Activated naive CD4-positive, alpha-beta T cell treated with anti-CD3 and anti-CD28 coated beads for 36 hours (primary cell): ENCODE measurements at regions of chr6 and their contacts with region 1.

Region 1: GRCh38 chr6:89080542-89081422 is at the start of gene PNRC1:
- DNase-seq: peak; percentile 100
- H3K4me3 Mint-ChIP-seq: peak within 1 kb of the TSS; percentile 93
- H3K27ac Mint-ChIP-seq: peak within 1 kb of the TSS; percentile 99
- H3K4me1 Mint-ChIP-seq: peaks cover 30% of the 10 kb centered on the region
- H3K27me3 Mint-ChIP-seq: no peaks in the 10 kb centered on the region
- total RNA-seq, gene PNRC1: 110 to 111 TPM

Region 2: DNA sequence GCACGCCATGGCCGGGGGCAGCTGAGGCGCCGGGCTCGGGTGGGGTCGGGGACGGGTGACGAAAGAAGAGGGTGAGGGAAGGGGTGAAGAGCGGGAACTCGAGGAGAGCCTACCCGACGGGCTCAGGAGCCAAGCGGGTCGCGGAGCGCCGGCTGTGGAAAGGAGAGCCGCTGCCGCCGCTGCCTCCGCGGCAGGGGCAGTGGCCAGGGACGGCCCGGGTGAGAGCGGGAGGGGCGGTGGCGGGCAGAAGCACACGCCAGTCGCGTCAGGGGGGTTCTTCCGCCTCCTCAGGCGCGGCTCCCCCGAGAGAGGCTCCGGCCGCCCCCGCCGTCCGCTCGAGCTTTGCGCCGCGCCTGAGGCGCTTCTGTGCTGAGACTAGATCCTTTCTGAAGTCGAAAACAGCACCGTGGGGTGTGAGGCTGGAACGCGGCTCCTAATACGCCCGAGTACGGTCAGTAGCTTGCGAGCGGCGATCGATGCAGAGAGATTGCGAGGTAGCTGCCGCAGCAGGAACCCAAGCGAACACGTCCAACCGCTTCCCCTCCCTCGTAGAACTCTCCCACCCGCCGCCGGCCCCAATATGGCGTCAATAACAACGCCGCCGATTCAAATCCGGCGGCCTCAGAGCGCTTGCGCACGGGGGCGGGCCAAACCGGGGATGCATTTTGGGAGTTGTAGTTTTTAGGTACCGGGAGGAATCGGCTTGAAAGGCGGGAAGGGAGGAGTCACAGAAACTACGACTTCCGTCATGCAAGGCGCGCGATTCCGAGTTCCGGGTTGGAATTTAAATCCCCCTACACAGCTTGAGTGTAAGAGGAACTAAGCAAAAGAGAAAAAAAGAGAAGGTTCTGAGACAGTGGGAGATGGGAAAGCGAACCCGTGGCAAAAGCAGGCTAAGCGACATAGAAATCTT is 1378.8 kb before region 1 on chr6 and contains the start of gene AKIRIN2:
- CTCF ChIA-PET with region 1: no interaction called
- intact Hi-C with region 1: loop called (anchors 2 kb)
- DNase-seq: peak; percentile 97
- H3K4me3 Mint-ChIP-seq: peak within 1 kb of the TSS; percentile 86
- H3K27ac Mint-ChIP-seq: peak within 1 kb of the TSS; percentile 89
- H3K4me1 Mint-ChIP-seq: peaks cover 42% of the 10 kb centered on the region
- H3K27me3 Mint-ChIP-seq: no peaks in the 10 kb centered on the region
- total RNA-seq, gene AKIRIN2: 47.6 to 49.8 TPM

Region 3: DNA sequence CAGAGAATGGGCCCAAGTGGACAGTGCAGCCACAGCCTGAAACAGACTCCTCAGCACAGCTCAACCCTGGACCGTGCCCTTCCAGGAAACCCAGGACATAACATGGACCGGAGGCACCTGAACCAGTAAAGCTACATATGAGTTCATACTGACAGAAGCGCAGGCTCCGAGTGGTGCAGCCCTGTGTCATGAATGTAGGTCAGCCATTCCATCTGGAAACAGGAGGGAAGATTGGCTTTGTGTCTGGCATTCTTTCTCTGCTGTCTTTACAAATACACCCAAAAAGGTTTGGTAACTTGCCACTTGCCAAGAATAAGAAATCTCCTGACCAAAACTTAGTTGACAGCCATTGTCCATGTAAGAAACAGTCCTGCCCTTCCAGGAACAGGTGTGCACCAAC is 484.0 kb before region 1 on chr6:
- CTCF ChIA-PET with region 1: no interaction called
- intact Hi-C with region 1: no loop called
- DNase-seq: no peak
- H3K4me3 Mint-ChIP-seq: no peak overlapping the region
- H3K27ac Mint-ChIP-seq: no peak overlapping the region
- H3K4me1 Mint-ChIP-seq: no peaks in the 10 kb centered on the region
- H3K27me3 Mint-ChIP-seq: no peaks in the 10 kb centered on the region

Region 4: DNA sequence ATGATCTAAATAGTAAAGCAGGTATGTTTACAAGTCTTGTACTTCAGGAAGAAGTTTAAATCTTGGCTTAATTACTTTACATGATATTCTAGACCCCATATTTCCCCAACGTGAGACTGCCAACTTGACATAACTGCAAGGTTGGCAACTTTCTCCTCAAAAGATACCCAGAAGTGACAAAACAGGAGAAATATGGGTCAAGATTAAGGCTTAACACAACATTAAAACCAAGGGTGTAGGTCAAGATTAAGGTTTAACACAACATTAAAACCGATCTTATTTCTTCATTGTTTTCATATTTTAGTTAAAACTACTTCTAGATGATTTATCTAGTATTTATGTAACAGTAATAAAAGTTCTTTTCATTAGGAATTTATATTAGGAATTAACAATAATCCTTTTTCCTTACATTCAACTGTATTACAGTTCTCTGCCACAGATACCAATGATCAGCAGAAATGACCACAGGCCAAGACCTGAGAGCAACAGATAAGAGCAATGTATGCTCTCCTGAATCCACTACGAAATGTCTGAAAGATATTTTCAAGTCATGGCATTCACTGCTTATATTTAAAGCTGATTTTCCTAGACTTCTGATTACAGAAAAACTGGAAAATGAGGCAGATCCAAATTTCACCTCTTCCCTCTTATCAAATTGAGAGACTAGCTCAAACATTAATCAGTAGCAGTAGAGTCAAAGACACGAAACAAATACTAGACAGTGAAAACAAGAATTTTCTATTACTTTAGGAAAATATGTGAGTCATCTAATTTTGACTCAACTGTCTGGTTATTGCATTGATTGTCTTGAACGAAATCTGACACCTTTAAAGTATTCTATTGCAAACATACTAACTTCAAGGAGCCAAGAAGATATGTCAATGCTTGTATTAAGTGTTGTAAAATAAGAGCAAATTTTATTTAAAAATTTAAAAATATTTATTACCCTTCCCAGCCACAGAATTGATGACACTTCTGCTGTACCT is 189.6 kb before region 1 on chr6:
- CTCF ChIA-PET with region 1: no interaction called
- intact Hi-C with region 1: no loop called
- DNase-seq: no peak
- H3K4me3 Mint-ChIP-seq: no peak overlapping the region
- H3K27ac Mint-ChIP-seq: no peak overlapping the region
- H3K4me1 Mint-ChIP-seq: peaks cover 4% of the 10 kb centered on the region
- H3K27me3 Mint-ChIP-seq: no peaks in the 10 kb centered on the region

Region 5: GRCh38 chr6:89098461-89098860 is 17.7 kb after region 1 on chr6:
- CTCF ChIA-PET with region 1: interaction called, 7 read pairs
- intact Hi-C with region 1: loop called (anchors 1 kb)
- DNase-seq: no peak
- H3K4me3 Mint-ChIP-seq: no peak overlapping the region
- H3K27ac Mint-ChIP-seq: no peak overlapping the region
- H3K4me1 Mint-ChIP-seq: peaks cover 4% of the 10 kb centered on the region
- H3K27me3 Mint-ChIP-seq: no peaks in the 10 kb centered on the region

Region 6: DNA sequence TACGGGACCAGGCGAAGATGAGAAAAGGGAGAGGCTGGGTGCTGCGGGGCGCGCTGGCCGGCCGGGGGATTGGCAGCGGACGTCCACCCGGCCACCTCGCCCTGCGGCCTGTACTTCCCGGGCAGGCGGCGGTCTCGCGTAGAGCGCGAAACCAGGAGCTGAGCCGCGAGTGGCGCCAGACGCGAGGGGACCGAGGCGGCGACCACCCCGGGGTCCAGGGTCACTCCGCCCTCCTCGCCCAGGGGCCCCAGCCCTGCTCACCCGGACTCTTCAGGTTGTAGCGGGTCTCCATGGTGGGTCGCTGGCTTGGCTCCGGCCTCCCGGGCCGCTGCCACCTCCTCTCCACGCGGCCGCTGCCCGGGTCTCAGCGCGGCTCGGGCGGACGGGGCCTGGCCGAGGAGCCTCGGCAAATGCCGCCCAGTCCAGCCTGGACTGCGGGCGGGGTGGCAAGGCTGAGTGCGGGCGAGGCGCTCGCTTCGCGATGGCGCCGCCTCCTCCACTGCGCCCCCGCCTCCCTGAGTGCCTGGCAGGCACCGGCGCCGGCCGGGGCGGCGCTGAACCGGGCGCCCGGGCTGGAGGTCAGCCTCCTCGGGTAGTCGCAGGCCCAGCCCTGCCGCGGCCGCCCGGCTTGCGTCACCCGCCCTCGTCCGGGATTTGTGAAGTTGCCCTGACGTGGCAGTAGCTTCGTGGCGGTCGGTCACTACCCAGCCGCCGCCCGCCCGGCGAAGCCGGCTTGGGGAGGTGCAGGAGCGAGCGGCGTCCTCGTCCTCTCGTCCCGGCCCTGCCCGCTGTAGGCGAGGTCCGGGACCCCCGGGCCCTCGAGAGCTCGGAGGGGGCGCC is 271.7 kb after region 1 on chr6 and contains the start of gene UBE2J1:
- CTCF ChIA-PET with region 1: no interaction called
- intact Hi-C with region 1: loop called (anchors 1 kb)
- DNase-seq: peak; percentile 71
- H3K4me3 Mint-ChIP-seq: peak within 1 kb of the TSS; percentile 90
- H3K27ac Mint-ChIP-seq: peak within 1 kb of the TSS; percentile 84
- H3K4me1 Mint-ChIP-seq: peaks cover 66% of the 10 kb centered on the region
- H3K27me3 Mint-ChIP-seq: no peaks in the 10 kb centered on the region
- total RNA-seq, gene UBE2J1: 10.8 to 10.9 TPM

Region 7: GRCh38 chr6:89829591-89830385 is 749.0 kb after region 1 on chr6 and contains the start of gene CASP8AP2:
- CTCF ChIA-PET with region 1: no interaction called
- intact Hi-C with region 1: loop called (anchors 1 kb)
- DNase-seq: peak; percentile 98
- H3K4me3 Mint-ChIP-seq: peak within 1 kb of the TSS; percentile 99
- H3K27ac Mint-ChIP-seq: peak within 1 kb of the TSS; percentile 96
- H3K4me1 Mint-ChIP-seq: peaks cover 33% of the 10 kb centered on the region
- H3K27me3 Mint-ChIP-seq: no peaks in the 10 kb centered on the region
- total RNA-seq, gene CASP8AP2: 27.4 to 30.2 TPM